Dorsolateral prefrontal cortex (tissue), 120 donors: ENCODE measurements at regions of chr9 and their contacts with region 1.

Region 1: GRCh38 chr9:106929471-106930177 is 66.7 kb downstream of the ZNF462 start:
- DNase-seq: peak in 2 of 10 donors; percentile 33 to 46
- H3K4me3 ChIP-seq: peak overlapping the region in 3 of 59 donors; percentile 18 to 24 (median 21)
- H3K27ac ChIP-seq: peak overlapping the region in 11 of 59 donors; percentile 5 to 60 (median 27)
- H3K27me3 ChIP-seq: no peaks in the 10 kb centered on the region
- CTCF ChIP-seq: no peak

Region 2: GRCh38 chr9:106964822-106965525 is 35.4 kb after region 1 on chr9:
- intact Hi-C with region 1: loop called in 1 of 2 experiments (anchors 5 kb)
- DNase-seq: no peak
- H3K4me3 ChIP-seq: no peak overlapping the region
- H3K27ac ChIP-seq: no peak overlapping the region
- H3K27me3 ChIP-seq: no peaks in the 10 kb centered on the region
- CTCF ChIP-seq: no peak

Region 3: GRCh38 chr9:106983346-106983745 is 53.7 kb after region 1 on chr9:
- intact Hi-C with region 1: no loop called
- DNase-seq: no peak
- H3K4me3 ChIP-seq: no peak overlapping the region
- H3K27ac ChIP-seq: peak overlapping the region in 2 of 59 donors; percentile 18 to 21
- H3K27me3 ChIP-seq: no peaks in the 10 kb centered on the region
- CTCF ChIP-seq: no peak